Right lobe of liver (tissue), 6 donors: ENCODE measurements at regions of chr9 and their contacts with region 1.

Region 1: GRCh38 chr9:114906908-114907571 is 23.4 kb downstream of the TNFSF8 start:
- DNase-seq: no peak
- ATAC-seq: peak; percentile 64 to 69 (median 66)
- H3K4me3 ChIP-seq: no peak overlapping the region
- H3K27ac ChIP-seq: no peak overlapping the region
- H3K4me1 ChIP-seq: peaks cover 0 to 12% (median 6%) of the 10 kb centered on the region in 4 donors
- H3K27me3 ChIP-seq: no peaks in the 10 kb centered on the region
- CTCF ChIP-seq: peak; percentile 57 to 71 (median 62)
- POLR2A ChIP-seq: no peak

Region 2: GRCh38 chr9:114580698-114581097 is 326.3 kb before region 1 on chr9:
- intact Hi-C with region 1: no loop called
- DNase-seq: no peak
- ATAC-seq: no peak
- H3K4me3 ChIP-seq: no peak overlapping the region
- H3K27ac ChIP-seq: no peak overlapping the region
- H3K4me1 ChIP-seq: no peaks in the 10 kb centered on the region
- H3K27me3 ChIP-seq: no peaks in the 10 kb centered on the region
- CTCF ChIP-seq: no peak
- POLR2A ChIP-seq: no peak

Region 3: DNA sequence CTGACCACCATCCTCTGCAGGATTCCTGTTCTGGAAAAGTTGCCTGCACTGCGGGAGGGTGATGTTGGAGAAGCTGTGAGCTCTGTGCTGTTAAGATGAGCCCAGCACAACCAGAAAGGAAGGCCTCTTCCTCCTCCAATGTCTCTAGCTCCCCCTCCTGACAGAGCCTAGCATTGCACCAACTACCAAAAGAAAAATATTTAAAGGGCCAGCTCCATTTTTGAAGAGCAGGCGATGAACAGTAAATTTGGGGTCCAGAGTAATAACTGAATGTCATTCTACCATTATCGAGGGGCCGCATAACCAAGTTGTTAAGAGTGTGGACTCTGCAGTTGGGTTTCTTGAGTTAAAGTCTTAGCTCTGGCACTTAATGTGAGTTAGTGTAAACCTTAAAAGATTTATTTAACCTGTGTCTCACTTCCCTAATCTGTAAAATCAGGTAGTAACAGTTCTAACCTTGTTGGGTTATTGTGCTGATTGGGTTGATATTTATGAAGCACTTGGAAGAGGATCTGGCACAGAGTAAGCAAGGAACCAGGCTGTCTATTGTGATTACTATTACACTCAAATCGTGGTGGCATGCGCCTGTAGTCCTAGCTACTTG is 253.4 kb before region 1 on chr9:
- intact Hi-C with region 1: no loop called
- DNase-seq: peak in 2 of 3 donors; percentile 44 to 68
- ATAC-seq: peak; percentile 95 to 99 (median 98)
- H3K4me3 ChIP-seq: no peak overlapping the region
- H3K27ac ChIP-seq: no peak overlapping the region
- H3K4me1 ChIP-seq: no peaks in the 10 kb centered on the region
- H3K27me3 ChIP-seq: no peaks in the 10 kb centered on the region
- CTCF ChIP-seq: peak; percentile 88 to 93 (median 90)
- POLR2A ChIP-seq: no peak

Region 4: DNA sequence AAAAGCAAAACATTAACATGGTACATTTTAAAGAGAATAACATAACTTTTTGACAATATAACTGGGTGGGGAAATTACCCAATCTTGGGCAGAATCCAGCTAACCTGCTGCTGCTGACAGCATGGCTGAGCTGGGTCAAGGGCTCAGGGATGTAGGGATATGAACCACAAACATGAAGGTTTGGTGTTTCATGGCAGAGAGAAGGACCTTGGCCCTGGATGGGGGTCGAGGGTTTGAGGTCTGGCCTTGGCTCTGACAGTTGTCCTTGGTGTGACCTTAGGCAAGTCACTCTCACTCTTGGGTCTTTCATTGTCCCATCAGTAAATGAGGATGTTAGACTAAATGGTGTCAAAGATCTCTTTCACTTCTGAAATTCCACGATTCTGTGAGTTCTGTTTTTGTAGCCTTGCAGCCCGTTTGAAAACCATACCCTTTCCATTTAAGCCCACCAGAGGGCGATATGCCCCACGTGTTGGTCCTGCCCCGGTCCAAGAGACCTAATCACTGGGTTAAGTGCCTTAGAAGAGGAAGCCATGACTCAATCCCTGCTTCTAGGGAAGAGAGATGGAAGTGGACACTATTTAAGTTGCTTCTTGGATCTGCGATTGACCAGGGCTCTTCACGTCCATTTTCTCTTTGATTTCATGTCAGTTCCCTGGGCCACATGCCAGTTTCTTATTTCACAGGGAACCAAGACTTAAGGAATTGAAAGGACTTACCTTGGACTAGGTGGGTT is 168.3 kb before region 1 on chr9:
- intact Hi-C with region 1: loop called (anchors 5 to 10 kb)
- DNase-seq: peak; percentile 60 to 75 (median 68)
- ATAC-seq: peak; percentile 97 to 99 (median 99)
- H3K4me3 ChIP-seq: no peak overlapping the region
- H3K27ac ChIP-seq: no peak overlapping the region
- H3K4me1 ChIP-seq: peaks cover 0 to 12% (median 0%) of the 10 kb centered on the region in 4 donors
- H3K27me3 ChIP-seq: no peaks in the 10 kb centered on the region
- CTCF ChIP-seq: peak; percentile 84 to 94 (median 94)
- POLR2A ChIP-seq: no peak

Region 5: GRCh38 chr9:114745108-114745848 is 161.8 kb before region 1 on chr9:
- intact Hi-C with region 1: loop called in 1 of 2 experiments (anchors 10 kb)
- DNase-seq: no peak
- ATAC-seq: no peak
- H3K4me3 ChIP-seq: no peak overlapping the region
- H3K27ac ChIP-seq: no peak overlapping the region
- H3K4me1 ChIP-seq: peaks cover 0 to 13% (median 0%) of the 10 kb centered on the region in 4 donors
- H3K27me3 ChIP-seq: no peaks in the 10 kb centered on the region
- CTCF ChIP-seq: no peak
- POLR2A ChIP-seq: no peak